Mucosa of descending colon (tissue), 3 donors: ENCODE measurements at regions of chr4 and their contacts with region 1.

Region 1: DNA sequence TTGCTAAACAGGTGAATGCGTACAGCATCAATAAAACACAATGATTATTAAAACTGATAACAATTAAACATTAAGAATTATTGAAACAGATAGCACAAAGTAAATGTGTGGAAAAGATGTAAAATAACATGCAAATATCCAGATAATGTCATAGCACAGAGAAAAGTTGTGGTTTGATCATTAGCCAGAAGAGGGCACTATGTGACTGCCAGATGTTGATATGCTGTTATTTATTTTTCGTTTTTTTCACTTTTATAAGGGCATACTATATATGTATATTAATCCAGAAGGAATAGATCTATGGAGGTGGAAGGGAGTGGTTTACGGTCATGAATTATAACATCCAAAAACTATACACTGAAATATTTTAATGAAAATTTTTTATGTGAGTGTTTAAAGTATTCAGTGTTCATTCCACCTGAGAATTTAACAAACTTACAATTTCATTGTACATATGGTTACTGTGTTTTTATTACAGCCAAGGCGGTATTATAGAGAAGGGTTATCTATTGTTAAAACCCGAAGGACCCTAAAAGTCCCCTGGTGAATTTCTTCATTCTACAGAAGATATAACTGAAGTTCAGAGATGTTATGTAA is 211.9 kb upstream of the UGT8 start:
- DNase-seq: peak in 1 of 3 donors; percentile 58
- ATAC-seq: peak; percentile 54
- H3K4me3 ChIP-seq: no peak overlapping the region
- H3K4me1 ChIP-seq: no peaks in the 10 kb centered on the region
- CTCF ChIP-seq: peak; percentile 24

Region 2: GRCh38 chr4:113394730-113395530 is 991.8 kb before region 1 on chr4:
- intact Hi-C with region 1: loop called in 1 of 2 experiments (anchors 10 kb)
- DNase-seq: peak in 1 of 3 donors; percentile 86
- ATAC-seq: peak; percentile 98
- H3K4me3 ChIP-seq: no peak overlapping the region
- H3K4me1 ChIP-seq: no peaks in the 10 kb centered on the region
- CTCF ChIP-seq: peak; percentile 57

Region 3: DNA sequence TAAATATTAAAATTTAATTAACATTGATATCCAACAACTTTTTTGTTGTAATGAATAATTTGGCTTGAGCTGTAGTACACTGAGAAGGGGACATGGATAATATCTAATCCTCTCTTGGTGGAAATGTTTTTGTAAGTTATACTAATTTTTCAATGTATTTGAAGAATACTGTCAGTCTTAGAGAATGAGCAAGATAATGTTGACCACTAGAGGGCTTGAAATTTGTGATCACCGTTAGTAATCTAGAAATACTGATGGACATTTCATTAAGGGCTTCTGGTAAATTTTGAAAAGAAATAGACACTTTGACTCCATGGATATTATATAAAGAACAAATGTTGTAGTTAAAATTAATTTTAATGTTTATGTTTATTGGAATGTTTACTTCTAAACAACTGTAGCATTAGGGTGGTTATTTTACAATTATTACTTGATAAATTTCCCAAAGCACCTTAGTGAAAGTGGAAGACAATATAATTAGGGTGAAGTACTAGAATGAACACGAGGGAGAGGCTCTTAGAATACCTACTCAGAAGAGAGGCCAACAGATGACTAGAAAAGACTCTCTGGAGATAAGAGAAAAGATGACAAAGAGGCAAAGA is 605.2 kb before region 1 on chr4:
- intact Hi-C with region 1: loop called in 1 of 2 experiments (anchors 10 kb)
- DNase-seq: no peak
- ATAC-seq: no peak
- H3K4me3 ChIP-seq: no peak overlapping the region
- H3K4me1 ChIP-seq: no peaks in the 10 kb centered on the region
- CTCF ChIP-seq: no peak

Region 4: DNA sequence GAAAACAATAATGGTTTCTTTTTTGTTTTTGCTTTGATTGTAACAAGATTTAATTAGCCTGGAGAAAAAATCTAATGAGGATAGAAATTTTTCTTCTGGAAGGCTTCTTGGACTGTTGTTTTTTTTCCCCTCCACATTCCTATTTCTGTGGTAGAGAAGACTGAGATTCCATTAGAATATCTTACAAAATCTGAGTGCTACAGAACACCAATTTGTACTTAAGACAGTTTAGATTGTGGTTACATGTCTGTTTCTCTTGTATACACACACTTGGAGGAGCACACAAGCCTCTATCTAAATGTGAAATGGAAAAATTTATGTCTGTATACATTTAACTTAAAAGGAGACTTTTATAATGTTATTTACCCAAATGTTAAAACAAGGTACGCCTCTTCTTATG is 230.4 kb before region 1 on chr4:
- intact Hi-C with region 1: no loop called
- DNase-seq: no peak
- ATAC-seq: no peak
- H3K4me3 ChIP-seq: no peak overlapping the region
- H3K4me1 ChIP-seq: no peaks in the 10 kb centered on the region
- CTCF ChIP-seq: no peak

Region 5: DNA sequence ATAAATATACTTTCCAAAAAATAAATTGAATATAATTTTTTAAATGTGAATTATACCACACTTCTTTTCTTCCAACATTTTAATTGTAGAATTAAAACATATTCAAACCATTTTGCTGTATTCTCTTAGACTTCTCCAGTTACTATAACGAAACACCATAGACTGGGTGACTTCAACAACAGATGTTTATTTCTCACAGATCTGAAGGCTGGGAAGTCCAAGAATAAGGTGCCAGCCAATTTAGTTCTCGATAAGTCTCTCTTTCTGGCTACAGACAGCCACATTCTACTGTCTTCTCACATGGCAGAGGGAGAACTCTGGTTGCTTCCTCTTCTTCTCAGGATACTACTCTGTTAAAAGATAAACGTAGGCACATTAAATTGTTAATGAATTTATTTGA is 56.1 kb after region 1 on chr4:
- intact Hi-C with region 1: no loop called
- DNase-seq: no peak
- ATAC-seq: no peak
- H3K4me3 ChIP-seq: no peak overlapping the region
- H3K4me1 ChIP-seq: no peaks in the 10 kb centered on the region
- CTCF ChIP-seq: no peak

Region 6: GRCh38 chr4:114626207-114626606 is 239.5 kb after region 1 on chr4:
- intact Hi-C with region 1: no loop called
- DNase-seq: no peak
- ATAC-seq: peak; percentile 57
- H3K4me3 ChIP-seq: no peak overlapping the region
- H3K4me1 ChIP-seq: no peaks in the 10 kb centered on the region
- CTCF ChIP-seq: no peak

Region 7: DNA sequence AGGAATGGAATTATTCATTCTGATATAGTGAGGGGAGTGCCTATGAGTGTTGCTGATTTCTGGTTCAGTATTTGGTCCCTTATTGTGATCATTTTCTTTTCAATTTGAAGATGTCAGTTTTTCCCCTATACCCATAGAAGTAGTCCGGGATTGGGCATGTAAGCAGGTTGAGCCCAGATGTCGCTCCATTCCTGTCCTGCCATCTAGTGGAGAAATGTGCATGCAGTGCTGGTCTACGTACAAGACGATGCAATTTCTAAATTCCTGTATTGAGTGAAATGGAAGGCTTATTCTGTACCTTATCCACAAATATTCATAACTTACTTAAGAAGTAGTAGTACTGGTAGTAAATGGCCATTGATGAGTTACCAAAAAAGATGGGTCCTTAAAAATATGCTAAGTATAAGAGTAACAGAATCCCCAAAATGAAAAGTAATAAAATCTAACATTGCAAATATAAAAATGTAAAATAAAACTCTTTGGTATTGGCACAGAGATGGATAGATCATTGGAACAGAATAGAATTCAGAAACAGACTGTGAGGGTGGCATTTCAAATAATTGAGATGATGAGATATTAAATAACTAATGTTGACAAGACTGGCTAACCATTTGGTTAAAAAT is 272.8 kb after region 1 on chr4:
- intact Hi-C with region 1: loop called in 1 of 2 experiments (anchors 10 kb)
- DNase-seq: peak in 2 of 3 donors; percentile 54 to 87
- ATAC-seq: peak; percentile 94
- H3K4me3 ChIP-seq: no peak overlapping the region
- H3K4me1 ChIP-seq: peaks cover 7% of the 10 kb centered on the region
- CTCF ChIP-seq: peak; percentile 66

Region 8: GRCh38 chr4:114694770-114695169 is 308.0 kb after region 1 on chr4:
- intact Hi-C with region 1: loop called in 1 of 2 experiments (anchors 10 kb)
- DNase-seq: no peak
- ATAC-seq: no peak
- H3K4me3 ChIP-seq: no peak overlapping the region
- H3K4me1 ChIP-seq: no peaks in the 10 kb centered on the region
- CTCF ChIP-seq: peak; percentile 18